ENCODE measurements at regions of chr3 and their contacts with region 1.

Region 1: GRCh38 chr3:186849374-186849975 is 7.0 kb downstream of the ADIPOQ start:
- DNase-seq: peak; percentile 67
- ATAC-seq: peak; percentile 82
- H3K4me3 ChIP-seq: no peak overlapping the region
- H3K27ac ChIP-seq: no peak overlapping the region
- H3K4me1 ChIP-seq: no peaks in the 10 kb centered on the region
- H3K27me3 ChIP-seq: peaks cover 0 to 12% of the 10 kb centered on the region in 2 experiments; a peak in 1 of 5 replicates
- CTCF ChIP-seq: peak; percentile 72
- EP300 ChIP-seq: no peak
- POLR2A ChIP-seq: no peak
- RAD21 ChIP-seq: peak; percentile 63; the same call in 1 of the 2 replicates

Region 2: GRCh38 chr3:185439745-185440466 is 1409.6 kb before region 1 on chr3:
- CTCF ChIA-PET with region 1: no interaction called
- POLR2A ChIA-PET with region 1: no interaction called
- in situ Hi-C with region 1: no loop called
- intact Hi-C with region 1: no loop called
- DNase-seq: no peak
- ATAC-seq: no peak
- H3K4me3 ChIP-seq: no peak overlapping the region
- H3K27ac ChIP-seq: no peak overlapping the region
- H3K4me1 ChIP-seq: no peaks in the 10 kb centered on the region
- H3K27me3 ChIP-seq: no peaks in the 10 kb centered on the region
- CTCF ChIP-seq: no peak
- EP300 ChIP-seq: no peak
- POLR2A ChIP-seq: no peak
- RAD21 ChIP-seq: no peak

Region 3: GRCh38 chr3:186930641-186931531 is 81.4 kb after region 1 on chr3:
- CTCF ChIA-PET with region 1: interaction called, 8 read pairs
- POLR2A ChIA-PET with region 1: no interaction called
- in situ Hi-C with region 1: loop called (anchors 5 kb)
- intact Hi-C with region 1: loop called (anchors 2 kb)
- DNase-seq: peak; percentile 71
- ATAC-seq: peak; percentile 84
- H3K4me3 ChIP-seq: peak overlapping the region; percentile 68 to 81 (median 71)
- H3K27ac ChIP-seq: peak overlapping the region; percentile 45
- H3K4me1 ChIP-seq: peaks cover 25% of the 10 kb centered on the region
- H3K27me3 ChIP-seq: peaks cover 0 to 12% of the 10 kb centered on the region in 2 experiments; a peak in 3 of 5 replicates
- CTCF ChIP-seq: peak; percentile 53
- EP300 ChIP-seq: no peak
- POLR2A ChIP-seq: 0 out of 4 replicates have a peak, but pooled peaks of 1 of the 2 experiments have one; percentile 34
- RAD21 ChIP-seq: no peak; the same call in 1 of the 2 replicates

Region 4: GRCh38 chr3:186946756-186947375 is 97.4 kb after region 1 on chr3:
- CTCF ChIA-PET with region 1: no interaction called
- POLR2A ChIA-PET with region 1: no interaction called
- in situ Hi-C with region 1: no loop called
- intact Hi-C with region 1: no loop called
- DNase-seq: no peak
- ATAC-seq: no peak
- H3K4me3 ChIP-seq: no peak overlapping the region
- H3K27ac ChIP-seq: no peak overlapping the region
- H3K4me1 ChIP-seq: 0 out of 2 replicates have a peak, but pooled peaks cover 8% of the 10 kb centered on the region
- H3K27me3 ChIP-seq: no peaks in the 10 kb centered on the region
- CTCF ChIP-seq: no peak
- EP300 ChIP-seq: no peak
- POLR2A ChIP-seq: no peak
- RAD21 ChIP-seq: no peak

Region 5: DNA sequence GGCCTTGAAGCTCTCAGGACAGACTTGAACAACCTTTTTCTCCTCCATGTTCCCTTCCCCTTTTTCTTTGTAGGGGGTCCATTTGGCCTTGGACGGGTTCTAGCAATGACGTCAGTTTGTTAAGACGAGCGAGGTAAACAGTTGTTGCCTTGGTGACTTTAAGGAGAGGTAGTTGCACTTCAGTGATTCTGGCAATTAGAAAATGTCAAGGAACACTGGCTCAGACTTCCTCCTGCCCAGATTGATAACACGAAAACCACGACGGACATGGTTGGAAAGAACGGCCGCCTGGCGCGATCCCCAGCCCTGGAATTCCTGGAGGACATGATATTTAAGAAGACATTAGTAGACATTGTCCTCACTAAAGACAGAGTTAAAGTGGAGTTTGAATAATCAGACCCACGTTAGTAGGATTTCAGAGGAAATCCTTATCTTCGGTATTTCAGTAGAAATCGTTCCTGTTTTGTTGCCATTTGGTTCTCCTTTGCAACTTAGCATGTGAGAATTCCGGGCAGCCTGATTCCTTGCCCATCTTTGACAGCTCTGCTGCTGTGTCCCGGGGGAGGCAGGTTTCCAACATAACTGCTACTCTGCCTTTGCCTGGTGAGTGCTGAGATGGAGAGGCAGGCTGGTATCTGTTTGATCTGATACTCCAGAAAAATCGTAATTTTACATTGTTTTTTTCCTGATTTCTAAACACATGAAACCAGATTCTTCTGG is 168.2 kb after region 1 on chr3:
- CTCF ChIA-PET with region 1: no interaction called
- POLR2A ChIA-PET with region 1: no interaction called
- in situ Hi-C with region 1: no loop called
- intact Hi-C with region 1: loop called (anchors 2 kb)
- DNase-seq: no peak
- ATAC-seq: no peak
- H3K4me3 ChIP-seq: no peak overlapping the region
- H3K27ac ChIP-seq: no peak overlapping the region
- H3K4me1 ChIP-seq: peaks cover 13% of the 10 kb centered on the region
- H3K27me3 ChIP-seq: no peaks in the 10 kb centered on the region
- CTCF ChIP-seq: no peak
- EP300 ChIP-seq: no peak
- POLR2A ChIP-seq: no peak
- RAD21 ChIP-seq: no peak

Region 6: DNA sequence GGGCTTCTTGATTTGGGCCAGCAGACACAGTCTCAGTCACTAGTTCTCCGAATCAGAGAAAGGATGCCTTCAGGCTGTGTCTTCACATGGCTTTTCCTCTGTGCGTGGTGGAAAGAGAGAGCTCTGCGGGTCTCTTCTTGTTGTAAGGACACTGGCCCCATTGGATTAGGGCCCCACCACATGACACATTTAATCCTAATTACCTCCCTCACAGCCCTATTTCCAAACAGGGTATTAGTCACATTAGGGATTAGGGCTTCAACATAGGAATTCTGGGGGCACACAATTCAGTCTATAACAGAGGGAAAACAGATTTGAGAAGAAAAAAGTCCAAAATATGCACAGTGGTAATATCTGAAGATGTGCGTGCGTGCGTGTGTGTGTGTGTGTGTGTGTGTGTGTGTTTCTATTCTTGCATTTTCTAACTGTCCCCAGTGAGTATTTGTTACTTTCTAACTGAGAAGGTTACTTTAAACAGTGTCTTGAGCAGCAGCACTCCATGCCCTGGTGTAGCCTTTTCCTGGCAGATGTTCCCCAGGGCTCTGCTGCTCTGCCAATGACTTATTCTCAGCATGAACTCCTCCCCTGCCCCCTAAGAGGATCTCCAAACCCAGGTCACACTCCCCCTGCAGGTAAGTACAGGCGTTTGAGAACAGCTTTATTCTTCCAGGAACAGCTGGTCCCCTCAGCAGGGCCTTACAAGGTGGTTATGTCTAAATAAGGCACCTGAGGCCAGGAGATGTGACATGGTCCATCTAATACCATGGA is 216.9 kb after region 1 on chr3:
- CTCF ChIA-PET with region 1: interaction called, 6 read pairs
- POLR2A ChIA-PET with region 1: no interaction called
- in situ Hi-C with region 1: no loop called
- intact Hi-C with region 1: loop called (anchors 2 kb)
- DNase-seq: peak; percentile 65
- ATAC-seq: peak; percentile 73
- H3K4me3 ChIP-seq: no peak overlapping the region
- H3K27ac ChIP-seq: no peak overlapping the region
- H3K4me1 ChIP-seq: peaks cover 66% of the 10 kb centered on the region
- H3K27me3 ChIP-seq: no peaks in the 10 kb centered on the region
- CTCF ChIP-seq: peak; percentile 45
- EP300 ChIP-seq: no peak
- POLR2A ChIP-seq: no peak
- RAD21 ChIP-seq: peak; percentile 48; the same call in 1 of the 2 replicates

Region 7: GRCh38 chr3:187112934-187113793 is 263.7 kb after region 1 on chr3:
- CTCF ChIA-PET with region 1: interaction called, 5 read pairs
- POLR2A ChIA-PET with region 1: no interaction called
- in situ Hi-C with region 1: no loop called
- intact Hi-C with region 1: loop called (anchors 1 kb)
- DNase-seq: peak; percentile 12
- ATAC-seq: peak; percentile 43; the same call in 2 of the 3 replicates
- H3K4me3 ChIP-seq: no peak overlapping the region
- H3K27ac ChIP-seq: no peak overlapping the region
- H3K4me1 ChIP-seq: 0 out of 2 replicates have a peak, but pooled peaks cover 6% of the 10 kb centered on the region
- H3K27me3 ChIP-seq: peaks cover 0 to 7% of the 10 kb centered on the region in 2 experiments; a peak in 1 of 5 replicates
- CTCF ChIP-seq: peak; percentile 59
- EP300 ChIP-seq: no peak
- POLR2A ChIP-seq: no peak
- RAD21 ChIP-seq: no peak; the same call in 1 of the 2 replicates

Region 8: DNA sequence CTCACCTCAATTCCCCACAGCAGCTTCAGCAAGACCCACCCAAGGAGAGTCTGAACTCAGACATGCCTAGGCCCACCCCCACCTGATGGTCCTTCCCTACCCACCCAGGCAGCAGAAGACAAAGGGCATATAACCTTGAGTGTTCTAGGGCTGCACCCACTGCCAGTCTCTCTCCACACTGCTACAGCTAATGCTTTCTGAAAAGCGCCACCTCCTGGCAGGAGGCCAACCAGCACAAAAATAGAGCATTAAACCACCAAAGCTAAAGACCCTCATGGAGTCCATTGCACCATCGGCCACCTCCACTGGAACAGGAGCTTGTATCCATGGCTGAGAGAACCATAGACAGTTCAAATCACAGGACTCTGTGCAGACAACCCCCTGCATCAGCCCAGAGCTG is 301.1 kb after region 1 on chr3:
- CTCF ChIA-PET with region 1: no interaction called
- POLR2A ChIA-PET with region 1: no interaction called
- in situ Hi-C with region 1: no loop called
- intact Hi-C with region 1: loop called (anchors 5 kb)
- DNase-seq: peak; percentile 34
- ATAC-seq: peak; percentile 71
- H3K4me3 ChIP-seq: no peak overlapping the region
- H3K27ac ChIP-seq: no peak overlapping the region
- H3K4me1 ChIP-seq: no peaks in the 10 kb centered on the region
- H3K27me3 ChIP-seq: no peaks in the 10 kb centered on the region; a peak in 1 of 5 replicates
- CTCF ChIP-seq: peak; percentile 68
- EP300 ChIP-seq: no peak
- POLR2A ChIP-seq: no peak
- RAD21 ChIP-seq: no peak

Region 9: GRCh38 chr3:187164885-187165543 is 315.5 kb after region 1 on chr3:
- CTCF ChIA-PET with region 1: interaction called, 13 read pairs
- POLR2A ChIA-PET with region 1: interaction called, 3 read pairs
- in situ Hi-C with region 1: loop called (anchors 5 kb)
- intact Hi-C with region 1: loop called (anchors 1 kb)
- DNase-seq: peak; percentile 58
- ATAC-seq: peak; percentile 78
- H3K4me3 ChIP-seq: no peak overlapping the region
- H3K27ac ChIP-seq: no peak overlapping the region
- H3K4me1 ChIP-seq: no peaks in the 10 kb centered on the region
- H3K27me3 ChIP-seq: no peaks in the 10 kb centered on the region; a peak in 1 of 5 replicates
- CTCF ChIP-seq: peak; percentile 67
- EP300 ChIP-seq: no peak
- POLR2A ChIP-seq: no peak
- RAD21 ChIP-seq: 0 out of 2 replicates have a peak, but pooled peaks have one; percentile 39